MCF 10A (cell line): ENCODE measurements at regions of chr14 and their contacts with region 1.

Region 1: GRCh38 chr14:99480917-99481744 is at the start of gene CCNK:
- DNase-seq: peak; percentile 99
- H3K4me3 Mint-ChIP-seq: peak within 1 kb of the TSS; percentile 95
- H3K27ac Mint-ChIP-seq: peak within 1 kb of the TSS; percentile 97
- H3K4me1 Mint-ChIP-seq: peaks cover 38% of the 10 kb centered on the region
- H3K27me3 Mint-ChIP-seq: no peaks in the 10 kb centered on the region
- CTCF ChIP-seq: no peak
- total RNA-seq, gene CCNK: 70.4 and 87.7 TPM in 2 replicates

Region 2: DNA sequence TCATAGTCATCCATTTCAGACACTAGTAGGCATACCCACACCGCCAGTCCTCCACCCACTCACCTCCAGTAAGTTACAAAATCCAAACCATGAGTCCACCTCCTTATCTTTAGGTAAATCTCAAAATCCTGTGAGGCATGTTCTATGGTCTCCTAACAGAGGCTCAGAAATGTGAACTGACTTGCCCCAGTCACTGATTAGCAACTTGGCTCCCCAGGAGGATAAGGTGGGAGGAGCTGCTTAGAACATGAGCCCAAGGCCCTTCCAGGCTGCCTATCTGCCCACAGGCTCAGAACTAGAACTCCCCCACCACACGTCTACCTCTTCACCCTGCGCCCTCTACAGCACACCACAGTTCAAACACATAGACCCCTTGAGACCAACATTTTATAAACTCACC is 20.3 kb before region 1 on chr14:
- CTCF ChIA-PET with region 1: interaction called, 4 read pairs
- POLR2A ChIA-PET with region 1: interaction called, 24 read pairs
- intact Hi-C with region 1: no loop called
- DNase-seq: peak; percentile 5
- H3K4me3 Mint-ChIP-seq: no peak overlapping the region
- H3K27ac Mint-ChIP-seq: peak overlapping the region; percentile 67
- H3K4me1 Mint-ChIP-seq: peaks cover 17% of the 10 kb centered on the region
- H3K27me3 Mint-ChIP-seq: no peaks in the 10 kb centered on the region
- CTCF ChIP-seq: no peak

Region 3: DNA sequence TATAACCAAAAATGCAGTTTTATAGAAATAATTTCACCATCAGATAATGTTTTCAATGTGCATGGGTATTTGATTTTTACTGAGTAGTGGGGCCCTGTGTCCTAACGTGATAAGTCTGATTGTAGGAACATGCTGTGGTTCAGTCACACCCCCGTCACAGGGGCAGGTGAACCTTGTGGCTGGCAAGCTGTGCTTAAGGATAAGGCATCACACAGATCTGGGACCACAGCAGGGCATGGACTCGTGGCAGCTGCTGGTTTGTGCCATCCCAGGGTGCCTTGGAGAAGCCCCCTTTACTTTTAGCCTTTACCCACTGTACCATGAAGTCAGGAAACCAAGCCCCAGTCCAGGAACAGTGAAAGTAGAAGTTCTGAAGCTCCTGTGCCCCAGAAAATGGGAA is 16.8 kb after region 1 on chr14:
- CTCF ChIA-PET with region 1: no interaction called
- POLR2A ChIA-PET with region 1: interaction called, 18 read pairs
- intact Hi-C with region 1: no loop called
- DNase-seq: no peak
- H3K4me3 Mint-ChIP-seq: no peak overlapping the region
- H3K27ac Mint-ChIP-seq: no peak overlapping the region
- H3K4me1 Mint-ChIP-seq: no peaks in the 10 kb centered on the region
- H3K27me3 Mint-ChIP-seq: no peaks in the 10 kb centered on the region
- CTCF ChIP-seq: no peak

Region 4: GRCh38 chr14:99706107-99706900 is 225.2 kb after region 1 on chr14:
- CTCF ChIA-PET with region 1: no interaction called
- POLR2A ChIA-PET with region 1: no interaction called
- intact Hi-C with region 1: no loop called
- DNase-seq: no peak
- H3K4me3 Mint-ChIP-seq: no peak overlapping the region
- H3K27ac Mint-ChIP-seq: no peak overlapping the region
- H3K4me1 Mint-ChIP-seq: no peaks in the 10 kb centered on the region
- H3K27me3 Mint-ChIP-seq: no peaks in the 10 kb centered on the region
- CTCF ChIP-seq: no peak